ENCODE measurements at regions of chr1 and their contacts with region 1.

Region 1: GRCh38 chr1:205273551-205273982 is 45.8 kb downstream of the TMCC2 start:
- DNase-seq: peak; percentile 91
- H3K4me3 ChIP-seq: no peak overlapping the region; a peak in 1 of 4 replicates
- H3K27ac ChIP-seq: no peak overlapping the region
- H3K4me1 ChIP-seq: peaks cover 3 to 10% of the 10 kb centered on the region in 2 experiments; a peak in 3 of 4 replicates
- H3K27me3 ChIP-seq: no peaks in the 10 kb centered on the region
- CTCF ChIP-seq: peak; percentile 95
- EP300 ChIP-seq: no peak
- RAD21 ChIP-seq: peak; percentile 97

Region 2: GRCh38 chr1:204802401-204803175 is 471.0 kb before region 1 on chr1:
- CTCF ChIA-PET with region 1: no interaction called
- POLR2A ChIA-PET with region 1: no interaction called
- DNase-seq: no peak
- H3K4me3 ChIP-seq: no peak overlapping the region
- H3K27ac ChIP-seq: no peak overlapping the region
- H3K4me1 ChIP-seq: peaks cover 0 to 2% of the 10 kb centered on the region in 2 experiments; a peak in 1 of 4 replicates
- H3K27me3 ChIP-seq: peaks cover 8% of the 10 kb centered on the region; the same call in 1 of the 2 replicates
- CTCF ChIP-seq: no peak
- EP300 ChIP-seq: no peak
- RAD21 ChIP-seq: no peak

Region 3: GRCh38 chr1:204941421-204942338 is 331.9 kb before region 1 on chr1:
- CTCF ChIA-PET with region 1: no interaction called
- POLR2A ChIA-PET with region 1: no interaction called
- DNase-seq: peak; percentile 77
- H3K4me3 ChIP-seq: no peak overlapping the region; a peak in 1 of 4 replicates
- H3K27ac ChIP-seq: no peak overlapping the region
- H3K4me1 ChIP-seq: no peaks in the 10 kb centered on the region
- H3K27me3 ChIP-seq: no peaks in the 10 kb centered on the region
- CTCF ChIP-seq: peak; percentile 84
- EP300 ChIP-seq: no peak
- RAD21 ChIP-seq: peak; percentile 77

Region 4: DNA sequence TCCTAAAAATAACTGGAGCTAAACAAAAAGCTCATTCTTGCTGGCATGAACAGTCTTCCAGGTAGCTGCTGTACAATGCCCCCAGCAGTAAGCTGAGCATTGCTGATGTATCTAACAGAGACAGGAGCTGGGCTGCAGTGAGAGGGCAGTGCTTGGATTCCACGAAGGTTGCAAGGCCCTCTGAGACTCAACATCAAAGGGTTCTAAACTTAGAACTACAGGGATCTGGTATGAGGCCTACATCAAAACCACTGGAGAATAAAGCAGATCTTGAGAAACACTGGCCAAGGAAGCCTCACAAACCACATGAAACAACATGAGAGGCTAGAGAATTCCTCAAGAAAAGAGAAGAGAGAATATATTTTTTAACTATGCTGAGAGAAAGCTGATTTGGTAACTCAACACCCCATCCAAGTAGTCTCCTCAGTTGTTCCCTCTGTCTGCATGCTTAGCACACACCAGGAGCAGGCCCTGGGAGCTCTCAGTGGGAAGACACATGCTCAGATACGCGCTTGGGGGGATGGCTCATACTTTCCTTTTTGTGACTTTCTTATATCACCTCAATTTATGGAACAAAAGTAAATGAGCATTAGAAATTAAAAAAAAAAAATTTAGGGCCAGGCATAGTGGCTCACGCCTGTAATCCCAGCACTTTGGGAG is 89.8 kb before region 1 on chr1:
- CTCF ChIA-PET with region 1: no interaction called
- POLR2A ChIA-PET with region 1: no interaction called
- DNase-seq: no peak
- H3K4me3 ChIP-seq: no peak overlapping the region
- H3K27ac ChIP-seq: 0 out of 4 replicates have a peak overlapping the region, but pooled peaks of 1 of the 2 experiments have one; percentile 8
- H3K4me1 ChIP-seq: peaks cover 0 to 15% of the 10 kb centered on the region in 2 experiments; a peak in 1 of 4 replicates
- H3K27me3 ChIP-seq: no peaks in the 10 kb centered on the region
- CTCF ChIP-seq: no peak
- EP300 ChIP-seq: no peak
- RAD21 ChIP-seq: no peak

Region 5: DNA sequence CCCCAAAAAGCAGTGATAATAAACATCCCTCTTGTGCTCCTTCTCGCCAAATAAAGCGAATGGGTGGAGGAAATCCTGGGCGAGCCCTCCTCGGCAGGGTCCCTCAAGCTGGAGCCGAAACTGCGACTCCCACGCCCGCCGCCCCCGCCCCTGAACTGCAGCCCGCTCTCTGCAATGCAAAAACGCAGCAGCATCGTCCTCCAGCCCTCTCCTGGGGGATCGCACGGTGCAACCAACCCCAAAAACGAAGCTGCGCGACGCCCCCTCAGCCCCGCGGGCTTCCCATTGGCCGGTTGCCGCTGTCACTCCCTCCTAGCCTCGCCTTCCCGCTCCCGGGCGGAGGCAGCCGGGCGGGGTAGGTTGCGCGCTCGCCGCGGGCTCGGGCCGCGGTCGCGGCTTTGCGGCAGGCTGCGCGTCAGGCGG is 46.0 kb before region 1 on chr1 and contains the start of gene TMCC2:
- CTCF ChIA-PET with region 1: interaction called, 18 read pairs
- POLR2A ChIA-PET with region 1: no interaction called
- DNase-seq: peak; percentile 99
- H3K4me3 ChIP-seq: peak within 1 kb of the TSS; percentile 78 to 81
- H3K27ac ChIP-seq: peak within 1 kb of the TSS in 1 of 2 experiments; percentile 56; a peak in 1 of 4 replicates
- H3K4me1 ChIP-seq: peaks cover 4 to 21% of the 10 kb centered on the region in 2 experiments; a peak in 2 of 4 replicates
- H3K27me3 ChIP-seq: no peaks in the 10 kb centered on the region
- CTCF ChIP-seq: no peak
- EP300 ChIP-seq: no peak
- RAD21 ChIP-seq: peak; percentile 8; the same call in 1 of the 2 replicates
- polyA plus RNA-seq, gene TMCC2: 5.3 and 6.0 TPM in 2 replicates

Region 6: GRCh38 chr1:205284343-205285144 is 11.0 kb after region 1 on chr1:
- CTCF ChIA-PET with region 1: interaction called, 86 read pairs
- POLR2A ChIA-PET with region 1: no interaction called
- DNase-seq: peak; percentile 56
- H3K4me3 ChIP-seq: no peak overlapping the region
- H3K27ac ChIP-seq: peak overlapping the region; percentile 66 to 82
- H3K4me1 ChIP-seq: peaks cover 8 to 33% of the 10 kb centered on the region in 2 experiments; a peak in 3 of 4 replicates
- H3K27me3 ChIP-seq: no peaks in the 10 kb centered on the region
- CTCF ChIP-seq: no peak
- EP300 ChIP-seq: peak in 1 of 2 experiments; percentile 77; a peak in 1 of 4 replicates
- RAD21 ChIP-seq: no peak

Region 7: GRCh38 chr1:205321164-205321958 is 47.8 kb after region 1 on chr1 and contains the start of gene NUAK2:
- CTCF ChIA-PET with region 1: interaction called, 1,368 read pairs
- POLR2A ChIA-PET with region 1: interaction called, 12 read pairs
- DNase-seq: peak; percentile 94
- H3K4me3 ChIP-seq: peak within 1 kb of the TSS; percentile 78 to 95
- H3K27ac ChIP-seq: peak within 1 kb of the TSS in 1 of 2 experiments; percentile 75; a peak in 2 of 4 replicates
- H3K4me1 ChIP-seq: peaks cover 19 to 31% of the 10 kb centered on the region in 2 experiments
- H3K27me3 ChIP-seq: no peaks in the 10 kb centered on the region
- CTCF ChIP-seq: peak; percentile 45
- EP300 ChIP-seq: no peak
- RAD21 ChIP-seq: no peak
- polyA plus RNA-seq, gene NUAK2: 6.8 and 11.1 TPM in 2 replicates

Region 8: DNA sequence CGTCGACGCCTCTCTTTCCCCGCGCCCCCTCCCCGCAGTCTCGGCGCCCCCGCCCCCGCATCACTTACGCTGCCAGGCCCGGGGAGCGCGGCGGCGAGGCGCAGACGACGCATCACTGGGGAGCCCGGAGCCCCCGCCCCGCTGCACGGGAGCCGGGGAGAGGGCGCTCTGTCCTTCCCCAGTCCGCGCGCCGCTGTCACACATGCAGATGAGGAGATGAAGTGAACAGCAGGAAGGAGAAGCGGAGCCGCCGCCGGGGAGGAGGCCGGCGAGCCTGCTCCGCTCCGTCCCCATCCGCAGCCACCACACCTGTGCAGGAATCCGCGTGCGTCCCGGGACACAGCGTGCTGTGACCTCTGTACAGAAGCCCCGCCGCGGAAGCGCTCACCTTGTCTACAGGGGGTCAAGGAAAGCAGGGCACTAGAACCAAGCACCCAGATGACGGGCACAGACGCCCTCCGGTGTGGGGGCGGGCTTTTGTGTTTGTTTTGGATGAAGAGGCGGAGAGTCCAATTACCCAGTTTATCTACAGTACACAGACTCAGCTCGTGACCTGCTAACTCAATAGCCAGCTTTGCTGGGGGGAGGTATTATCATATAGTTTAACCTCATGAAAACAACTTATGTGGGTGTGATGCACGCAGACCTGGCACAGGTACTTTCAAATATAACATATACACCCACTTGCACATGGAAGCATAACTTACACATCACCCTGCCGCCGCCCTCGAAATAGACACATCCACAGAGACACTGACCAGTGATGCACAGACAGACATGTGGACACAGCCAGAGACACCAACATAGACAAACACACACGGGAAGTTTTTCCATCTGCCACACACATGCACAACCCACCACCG is 70.7 kb after region 1 on chr1:
- CTCF ChIA-PET with region 1: interaction called, 11 read pairs
- POLR2A ChIA-PET with region 1: no interaction called
- DNase-seq: peak; percentile 77
- H3K4me3 ChIP-seq: peak overlapping the region; percentile 41 to 56
- H3K27ac ChIP-seq: no peak overlapping the region
- H3K4me1 ChIP-seq: peaks cover 0 to 7% of the 10 kb centered on the region in 2 experiments; a peak in 1 of 4 replicates
- H3K27me3 ChIP-seq: peaks cover 11% of the 10 kb centered on the region; the same call in 1 of the 2 replicates
- CTCF ChIP-seq: no peak
- EP300 ChIP-seq: no peak
- RAD21 ChIP-seq: no peak

Measured in SK-N-SH (cell line).